HEK293T (cell line): ENCODE measurements at regions of chr7 and their contacts with region 1.

Region 1: GRCh38 chr7:151315038-151315655 is 26.5 kb upstream of the NUB1 start:
- DNase-seq: peak; percentile 90

Region 2: GRCh38 chr7:151304856-151305255 is 10.3 kb before region 1 on chr7:
- CTCF ChIA-PET with region 1: interaction called, 11 read pairs
- POLR2A ChIA-PET with region 1: no interaction called
- DNase-seq: no peak

Region 3: GRCh38 chr7:151327659-151328058 is 12.5 kb after region 1 on chr7:
- CTCF ChIA-PET with region 1: interaction called, 13 read pairs
- POLR2A ChIA-PET with region 1: no interaction called
- DNase-seq: no peak

Region 4: GRCh38 chr7:151351027-151351426 is 35.9 kb after region 1 on chr7:
- CTCF ChIA-PET with region 1: interaction called, 25 read pairs
- POLR2A ChIA-PET with region 1: interaction called, 3 read pairs
- DNase-seq: peak; percentile 49

Region 5: GRCh38 chr7:151484971-151485707 is 170.0 kb after region 1 on chr7:
- CTCF ChIA-PET with region 1: no interaction called
- POLR2A ChIA-PET with region 1: no interaction called
- DNase-seq: no peak

Region 6: GRCh38 chr7:151612374-151613160 is 297.4 kb after region 1 on chr7:
- CTCF ChIA-PET with region 1: interaction called, 10 read pairs
- POLR2A ChIA-PET with region 1: no interaction called
- DNase-seq: no peak